ENCODE measurements at regions of chr17 and their contacts with region 1.

Region 1: GRCh38 chr17:74864866-74865395 is 5.2 kb upstream of the GRIN2C start:
- DNase-seq: peak; percentile 78
- ATAC-seq: peak; percentile 60
- H3K4me3 Mint-ChIP-seq: no peak overlapping the region
- H3K27ac Mint-ChIP-seq: no peak overlapping the region
- H3K4me1 Mint-ChIP-seq: peaks cover 12% of the 10 kb centered on the region
- H3K27me3 Mint-ChIP-seq: peaks cover 20% of the 10 kb centered on the region

Region 2: DNA sequence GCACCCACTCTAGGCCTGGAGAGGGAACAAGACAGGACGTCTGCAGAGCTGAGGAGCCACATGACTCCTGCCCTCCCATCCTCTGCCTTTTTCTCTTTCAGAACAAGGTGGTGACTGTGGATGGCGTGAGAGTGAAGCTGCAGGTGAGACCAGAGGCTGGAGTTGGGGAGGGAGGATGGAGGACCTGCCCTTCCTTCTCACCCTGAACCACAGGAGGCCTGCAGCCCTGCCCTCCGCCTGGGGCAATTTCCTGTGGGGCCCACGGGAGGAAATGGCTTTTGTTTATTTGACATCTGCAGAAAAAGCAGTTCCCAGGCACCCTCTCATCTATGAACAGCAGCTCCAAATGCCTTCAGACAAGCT is 122.8 kb before region 1 on chr17:
- CTCF ChIA-PET with region 1: interaction called, 31 read pairs
- DNase-seq: peak; percentile 88
- ATAC-seq: peak; percentile 30
- H3K4me3 Mint-ChIP-seq: peak overlapping the region; percentile 43
- H3K27ac Mint-ChIP-seq: peak overlapping the region; percentile 91
- H3K4me1 Mint-ChIP-seq: peaks cover 84% of the 10 kb centered on the region
- H3K27me3 Mint-ChIP-seq: no peaks in the 10 kb centered on the region

Region 3: GRCh38 chr17:74748529-74749365 is 116.2 kb before region 1 on chr17 and contains the start of gene NHERF1:
- CTCF ChIA-PET with region 1: interaction called, 31 read pairs
- DNase-seq: peak; percentile 96
- ATAC-seq: peak; percentile 87
- H3K4me3 Mint-ChIP-seq: peak within 1 kb of the TSS; percentile 100
- H3K27ac Mint-ChIP-seq: peak within 1 kb of the TSS; percentile 85
- H3K4me1 Mint-ChIP-seq: peaks cover 54% of the 10 kb centered on the region
- H3K27me3 Mint-ChIP-seq: no peaks in the 10 kb centered on the region
- total RNA-seq, gene NHERF1: 284 to 377 TPM

Region 4: DNA sequence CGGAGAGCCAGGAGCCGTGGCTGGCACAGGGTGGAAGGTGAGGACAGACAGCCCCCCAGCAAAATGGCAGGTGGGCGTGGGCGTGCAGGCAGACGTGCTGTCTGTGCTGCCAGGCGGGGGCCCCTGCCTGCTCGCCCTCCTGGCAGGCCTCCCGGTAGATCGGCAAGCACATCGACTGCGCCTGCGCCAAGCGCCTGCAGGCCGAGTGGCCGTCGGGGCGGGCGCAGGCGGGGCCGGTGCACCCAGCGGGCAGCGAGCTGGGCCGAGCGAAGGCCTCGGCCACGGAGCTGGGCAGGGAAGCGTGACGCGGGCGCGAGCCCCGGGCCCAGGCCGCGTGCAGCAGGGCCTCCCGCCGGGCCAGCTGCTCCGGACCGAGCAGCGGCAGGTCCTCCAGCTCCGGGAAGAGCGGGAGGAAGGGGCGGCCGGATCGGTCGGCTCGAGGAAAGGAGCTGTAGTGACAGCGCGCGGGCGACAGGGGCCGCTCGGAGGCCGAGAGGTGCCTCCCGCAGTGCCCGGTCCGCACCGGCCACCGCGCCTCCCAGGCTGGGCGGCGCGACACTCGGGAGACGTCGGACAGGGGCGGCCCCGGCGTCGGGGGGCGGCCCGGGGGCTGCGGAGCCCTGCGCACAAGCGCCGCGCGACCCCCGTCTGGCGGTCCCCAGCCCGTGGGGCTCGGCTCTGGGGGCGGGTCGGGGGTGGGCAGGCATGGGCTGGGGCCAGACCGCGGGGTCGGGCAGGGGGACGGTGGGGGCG is 22.2 kb before region 1 on chr17:
- CTCF ChIA-PET with region 1: interaction called, 14 read pairs
- DNase-seq: no peak
- ATAC-seq: no peak
- H3K4me3 Mint-ChIP-seq: no peak overlapping the region
- H3K27ac Mint-ChIP-seq: no peak overlapping the region
- H3K4me1 Mint-ChIP-seq: peaks cover 10% of the 10 kb centered on the region
- H3K27me3 Mint-ChIP-seq: peaks cover 21% of the 10 kb centered on the region

Region 5: GRCh38 chr17:74852237-74853047 is 12.5 kb before region 1 on chr17:
- CTCF ChIA-PET with region 1: interaction called, 10 read pairs
- DNase-seq: peak; percentile 68
- ATAC-seq: peak; percentile 87
- H3K4me3 Mint-ChIP-seq: peak overlapping the region; percentile 50
- H3K27ac Mint-ChIP-seq: no peak overlapping the region
- H3K4me1 Mint-ChIP-seq: peaks cover 3% of the 10 kb centered on the region
- H3K27me3 Mint-ChIP-seq: peaks cover 51% of the 10 kb centered on the region

Measured in activated CD8-positive, alpha-beta memory T cell treated with anti-CD3 and anti-CD28 coated beads, Interleukin-2, amount 10 ng/mL, durations not matched to agents 7 days and 5 days (primary cell).